ENCODE measurements at regions of chr6 and their contacts with region 1.

Region 1: DNA sequence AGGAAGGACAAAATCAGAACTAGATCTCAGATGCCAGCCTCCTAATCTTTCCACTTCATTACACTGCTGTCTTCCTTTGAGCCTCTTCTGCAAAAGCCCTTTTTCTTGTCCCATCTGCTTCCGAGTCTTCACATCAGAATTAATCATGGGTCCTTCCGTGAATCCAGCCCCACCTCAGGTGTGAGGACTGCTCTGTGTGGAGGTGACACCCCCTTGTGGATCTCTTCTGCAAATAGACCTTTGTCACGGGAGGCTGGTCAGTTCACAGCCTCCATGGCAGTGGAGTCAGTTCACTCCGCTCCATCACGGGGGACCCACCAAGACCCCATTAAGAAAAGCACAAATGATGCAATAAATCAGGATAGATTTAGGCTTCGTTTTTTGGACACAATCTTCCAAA is 171.1 kb downstream of the ADAT2 start:
- DNase-seq: peak; percentile 54 to 62
- H3K4me3 ChIP-seq: no peak overlapping the region
- H3K4me3 Mint-ChIP-seq: no peak overlapping the region
- H3K27ac Mint-ChIP-seq: no peak overlapping the region
- H3K4me1 ChIP-seq: no peaks in the 10 kb centered on the region
- H3K4me1 Mint-ChIP-seq: peaks cover 7% of the 10 kb centered on the region
- H3K27me3 ChIP-seq: no peaks in the 10 kb centered on the region
- H3K27me3 Mint-ChIP-seq: no peaks in the 10 kb centered on the region
- CTCF ChIP-seq: peak; percentile 55 to 58

Region 2: GRCh38 chr6:143049611-143050010 is 229.8 kb before region 1 on chr6:
- CTCF ChIA-PET with region 1: no interaction called
- POLR2A ChIA-PET with region 1: no interaction called
- intact Hi-C with region 1: loop called (anchors 5 kb)
- DNase-seq: no peak
- H3K4me3 ChIP-seq: no peak overlapping the region
- H3K4me3 Mint-ChIP-seq: no peak overlapping the region
- H3K27ac Mint-ChIP-seq: no peak overlapping the region
- H3K4me1 ChIP-seq: no peaks in the 10 kb centered on the region
- H3K4me1 Mint-ChIP-seq: no peaks in the 10 kb centered on the region
- H3K27me3 ChIP-seq: no peaks in the 10 kb centered on the region
- H3K27me3 Mint-ChIP-seq: peaks cover 9% of the 10 kb centered on the region
- CTCF ChIP-seq: no peak

Region 3: DNA sequence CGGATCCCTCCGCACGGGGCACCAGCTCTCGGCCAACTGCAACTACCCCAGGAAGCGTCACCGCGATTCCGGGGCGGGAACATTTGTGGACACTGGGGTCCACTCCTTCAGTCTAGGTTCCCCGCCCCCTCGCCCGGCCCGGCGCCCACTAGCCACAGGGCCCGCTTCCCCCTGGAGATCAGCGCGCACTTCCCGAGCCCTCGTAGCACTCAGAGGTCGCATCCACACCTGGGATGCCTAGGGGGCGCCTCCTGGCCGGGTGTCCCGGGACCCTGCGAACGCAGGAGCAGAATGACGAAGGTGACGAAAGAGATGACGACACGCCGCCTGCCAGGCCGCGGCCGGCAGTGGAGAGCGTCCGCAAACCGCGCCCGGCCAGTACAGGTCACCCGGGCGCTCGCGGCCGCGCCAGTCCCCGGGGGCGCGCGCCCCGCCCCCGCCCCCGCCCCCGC is 219.0 kb before region 1 on chr6:
- CTCF ChIA-PET with region 1: no interaction called
- POLR2A ChIA-PET with region 1: no interaction called
- intact Hi-C with region 1: loop called (anchors 2 kb)
- DNase-seq: peak; percentile 85 to 88
- H3K4me3 ChIP-seq: peak overlapping the region; percentile 85
- H3K4me3 Mint-ChIP-seq: peak overlapping the region; percentile 94
- H3K27ac Mint-ChIP-seq: peak overlapping the region; percentile 96
- H3K4me1 ChIP-seq: peaks cover 18% of the 10 kb centered on the region
- H3K4me1 Mint-ChIP-seq: peaks cover 8% of the 10 kb centered on the region
- H3K27me3 ChIP-seq: no peaks in the 10 kb centered on the region
- H3K27me3 Mint-ChIP-seq: no peaks in the 10 kb centered on the region
- CTCF ChIP-seq: peak in 1 of 2 experiments; percentile 35

Region 4: GRCh38 chr6:143183666-143184065 is 95.7 kb before region 1 on chr6:
- CTCF ChIA-PET with region 1: no interaction called
- POLR2A ChIA-PET with region 1: no interaction called
- intact Hi-C with region 1: loop called (anchors 5 kb)
- DNase-seq: no peak
- H3K4me3 ChIP-seq: no peak overlapping the region
- H3K4me3 Mint-ChIP-seq: no peak overlapping the region
- H3K27ac Mint-ChIP-seq: no peak overlapping the region
- H3K4me1 ChIP-seq: peaks cover 2% of the 10 kb centered on the region; the same call in 1 of the 2 replicates
- H3K4me1 Mint-ChIP-seq: no peaks in the 10 kb centered on the region
- H3K27me3 ChIP-seq: no peaks in the 10 kb centered on the region
- H3K27me3 Mint-ChIP-seq: no peaks in the 10 kb centered on the region
- CTCF ChIP-seq: no peak

Region 5: DNA sequence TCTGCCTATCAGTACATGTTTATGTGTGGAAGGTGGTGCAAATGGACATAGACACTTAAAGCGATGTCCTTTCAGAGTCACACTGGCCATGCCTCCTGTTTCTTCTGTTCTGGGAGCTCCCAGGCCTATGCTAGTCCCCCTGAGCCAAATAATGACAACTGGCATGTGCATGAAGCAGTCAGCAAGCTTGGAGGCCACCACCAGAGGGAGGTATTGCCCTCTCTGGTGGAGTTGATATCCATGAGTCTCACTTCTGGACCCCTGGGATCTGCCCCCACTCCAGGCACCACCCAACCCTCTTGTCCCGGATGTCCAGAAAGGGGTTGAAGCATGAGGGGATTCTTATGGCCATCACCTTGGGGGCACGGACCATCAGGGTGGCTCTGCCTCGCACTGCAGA is 46.5 kb before region 1 on chr6:
- CTCF ChIA-PET with region 1: no interaction called
- POLR2A ChIA-PET with region 1: no interaction called
- intact Hi-C with region 1: loop called (anchors 1 kb)
- DNase-seq: peak; percentile 49 to 54
- H3K4me3 ChIP-seq: no peak overlapping the region
- H3K4me3 Mint-ChIP-seq: no peak overlapping the region
- H3K27ac Mint-ChIP-seq: no peak overlapping the region
- H3K4me1 ChIP-seq: peaks cover 10% of the 10 kb centered on the region
- H3K4me1 Mint-ChIP-seq: peaks cover 7% of the 10 kb centered on the region
- H3K27me3 ChIP-seq: no peaks in the 10 kb centered on the region
- H3K27me3 Mint-ChIP-seq: no peaks in the 10 kb centered on the region
- CTCF ChIP-seq: peak; percentile 54 to 67

Region 6: GRCh38 chr6:143248359-143248758 is 31.0 kb before region 1 on chr6:
- CTCF ChIA-PET with region 1: no interaction called
- POLR2A ChIA-PET with region 1: no interaction called
- intact Hi-C with region 1: no loop called
- DNase-seq: no peak
- H3K4me3 ChIP-seq: no peak overlapping the region
- H3K4me3 Mint-ChIP-seq: no peak overlapping the region
- H3K27ac Mint-ChIP-seq: no peak overlapping the region
- H3K4me1 ChIP-seq: peaks cover 10% of the 10 kb centered on the region
- H3K4me1 Mint-ChIP-seq: peaks cover 7% of the 10 kb centered on the region
- H3K27me3 ChIP-seq: no peaks in the 10 kb centered on the region
- H3K27me3 Mint-ChIP-seq: no peaks in the 10 kb centered on the region
- CTCF ChIP-seq: no peak